BJ (cell line): ENCODE measurements at regions of chrX and their contacts with region 1.

Region 1: DNA sequence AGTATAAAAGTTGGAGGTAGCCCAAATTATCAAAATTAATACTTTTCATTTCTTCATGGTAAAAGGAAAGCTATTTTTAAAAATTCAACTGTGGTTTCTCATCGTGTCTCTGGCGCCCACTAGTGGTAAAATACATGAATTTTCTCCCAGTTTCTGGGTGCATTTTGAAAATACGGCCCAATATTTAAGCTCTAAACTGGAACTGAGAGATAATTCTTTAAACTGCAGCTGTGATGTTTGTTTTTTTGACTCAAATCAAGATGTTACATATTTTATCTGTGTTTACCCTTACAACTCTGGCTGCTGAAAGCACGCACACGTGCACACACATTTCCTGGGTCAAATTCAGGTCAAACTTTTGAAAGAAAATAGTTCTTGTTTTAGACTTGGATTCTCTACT is 123.9 kb upstream of the ACSL4 start:
- DNase-seq: no peak
- H3K4me3 ChIP-seq: no peak overlapping the region
- H3K27me3 ChIP-seq: no peaks in the 10 kb centered on the region
- CTCF ChIP-seq: peak; percentile 69

Region 2: DNA sequence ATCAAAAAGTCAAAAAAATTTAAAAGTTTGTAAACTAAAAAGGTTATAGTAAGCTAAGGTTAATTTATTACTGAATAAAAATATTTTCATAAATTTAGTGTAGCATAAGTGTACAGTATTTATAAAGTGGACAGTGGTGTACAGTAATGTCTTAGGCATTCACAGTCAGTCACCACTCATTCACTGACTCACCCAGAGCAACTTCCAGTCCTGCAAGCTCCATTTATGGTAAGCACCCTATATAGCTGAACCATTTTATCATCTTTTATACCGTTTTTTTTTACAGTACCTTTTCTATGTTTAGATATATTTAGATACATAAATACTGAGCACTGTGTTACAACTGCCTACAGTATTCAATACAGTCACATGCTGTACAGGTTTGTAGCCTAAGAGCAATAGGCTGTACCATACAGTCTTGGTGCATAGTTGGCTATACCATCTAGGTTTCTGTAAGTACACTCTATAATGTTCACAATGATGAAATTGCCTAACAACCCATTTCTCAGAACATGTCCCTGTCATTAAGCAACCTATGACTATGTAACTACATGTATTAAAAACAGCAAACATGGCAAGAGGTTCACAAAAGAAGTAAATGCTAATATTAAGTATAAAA is 142.5 kb before region 1 on chrX:
- CTCF ChIA-PET with region 1: interaction called, 85 read pairs
- POLR2A ChIA-PET with region 1: interaction called, 3 read pairs
- DNase-seq: no peak
- H3K4me3 ChIP-seq: no peak overlapping the region
- H3K27me3 ChIP-seq: no peaks in the 10 kb centered on the region
- CTCF ChIP-seq: no peak

Region 3: DNA sequence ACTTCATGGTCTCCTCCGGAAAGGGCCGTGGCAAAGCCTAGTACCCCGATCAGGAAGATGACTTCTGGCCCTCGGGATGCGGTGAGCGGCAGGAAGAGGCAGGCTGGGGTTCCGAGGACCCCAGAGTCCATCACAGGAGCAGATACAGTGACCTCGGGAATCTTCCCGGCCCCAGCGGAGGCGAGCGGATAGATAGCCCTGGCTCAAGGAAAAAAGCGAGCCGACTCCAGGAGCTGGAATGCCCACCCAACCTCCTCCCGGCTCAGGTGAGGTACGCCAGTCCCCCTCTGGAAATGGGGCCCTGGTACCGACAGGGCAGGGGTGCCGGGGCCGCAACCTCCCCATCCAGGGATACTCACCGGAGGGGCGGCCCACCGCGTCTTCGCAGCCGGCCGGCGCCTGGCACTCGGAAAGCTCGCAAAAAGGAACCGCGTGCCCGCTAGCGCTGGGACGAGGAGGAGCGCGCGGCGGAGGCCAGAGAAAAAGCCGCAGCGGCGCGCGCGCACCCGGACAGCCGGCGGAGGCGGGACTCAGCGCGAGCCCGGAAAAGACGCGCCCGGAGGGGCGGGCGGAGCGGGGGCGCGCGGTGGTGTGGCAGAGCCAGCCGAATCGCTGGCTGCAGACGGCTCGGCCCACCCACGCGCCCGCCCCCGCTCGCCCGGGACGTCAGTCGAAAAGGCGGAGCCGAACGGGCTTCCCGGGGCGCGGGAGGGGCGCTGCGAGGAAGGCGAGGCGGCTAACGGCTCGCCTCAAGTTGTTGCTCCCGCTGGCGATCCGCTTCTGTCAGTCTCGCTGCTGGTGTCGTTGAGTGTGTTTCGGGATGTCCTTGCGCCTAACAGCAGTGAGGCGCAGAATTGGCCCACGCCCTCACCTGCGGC is 124.0 kb before region 1 on chrX and contains the start of gene ACSL4:
- CTCF ChIA-PET with region 1: interaction called, 12 read pairs
- POLR2A ChIA-PET with region 1: no interaction called
- DNase-seq: no peak
- H3K4me3 ChIP-seq: peak within 1 kb of the TSS; percentile 91
- H3K27me3 ChIP-seq: no peaks in the 10 kb centered on the region
- CTCF ChIP-seq: no peak
- polyA plus RNA-seq, gene ACSL4: 32.5 and 42.5 TPM in 2 replicates